ENCODE measurements at regions of chr22 and their contacts with region 1.

Region 1: GRCh38 chr22:38872172-38872830 is at the start of gene CBX6:
- DNase-seq: peak; percentile 93 to 99 (median 94)

Region 2: GRCh38 chr22:38718414-38718813 is 153.9 kb before region 1 on chr22:
- intact Hi-C with region 1: no loop called
- DNase-seq: peak in 4 of 10 donors; percentile 52 to 90 (median 74)

Region 3: DNA sequence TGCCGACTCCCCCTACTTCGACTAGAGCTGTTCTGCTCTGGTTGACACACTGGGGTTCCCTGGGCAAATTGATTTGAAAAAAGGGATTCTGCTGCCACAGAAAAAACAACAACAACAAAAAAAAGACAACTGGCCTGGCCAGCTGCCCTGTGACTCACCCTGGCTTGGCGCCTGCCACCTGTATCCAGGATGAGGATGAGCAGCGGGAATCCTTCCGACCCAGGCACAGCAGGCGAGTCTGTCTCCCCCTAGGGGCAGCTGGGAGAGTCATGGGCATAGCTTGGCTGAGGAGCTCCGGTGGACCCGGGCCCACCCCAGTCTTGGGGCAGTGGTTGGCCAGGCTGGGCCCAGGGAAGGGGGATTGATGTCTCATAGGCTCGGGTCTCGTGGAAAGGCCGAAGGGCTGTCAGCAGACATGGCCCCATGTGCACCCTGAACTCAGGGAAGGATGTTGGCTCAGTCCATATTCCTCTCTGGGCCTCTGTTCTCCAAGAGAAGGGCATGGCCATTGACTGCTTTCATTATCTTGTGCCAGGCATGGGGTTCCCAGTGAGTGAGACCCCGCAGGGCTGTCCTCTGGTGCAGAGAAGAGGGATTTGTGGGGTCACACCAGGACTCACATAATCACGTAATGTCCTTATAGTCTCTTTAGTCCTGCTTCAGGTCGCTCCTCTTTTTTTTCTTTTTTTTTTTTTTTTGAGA is 106.1 kb before region 1 on chr22:
- intact Hi-C with region 1: loop called (anchors 2 kb)
- DNase-seq: peak; percentile 51 to 95 (median 73)

Region 4: GRCh38 chr22:38890377-38890776 is 18.1 kb after region 1 on chr22:
- intact Hi-C with region 1: no loop called
- DNase-seq: no peak

Region 5: GRCh38 chr22:39003165-39003638 is 130.9 kb after region 1 on chr22:
- intact Hi-C with region 1: loop called (anchors 1 kb)
- DNase-seq: peak in 7 of 10 donors; percentile 13 to 87 (median 50)

Region 6: GRCh38 chr22:39144101-39144767 is 271.9 kb after region 1 on chr22:
- intact Hi-C with region 1: loop called (anchors 1 kb)
- DNase-seq: peak in 2 of 10 donors; percentile 63 to 69

Region 7: GRCh38 chr22:39319270-39320022 is 447.1 kb after region 1 on chr22 and contains the start of gene RPL3:
- intact Hi-C with region 1: loop called (anchors 10 kb)
- DNase-seq: peak; percentile 95 to 100 (median 96)

Measured in posterior cingulate gyrus (tissue), 11 donors.